A549 (cell line): ENCODE measurements at regions of chr10 and their contacts with region 1.

Region 1: DNA sequence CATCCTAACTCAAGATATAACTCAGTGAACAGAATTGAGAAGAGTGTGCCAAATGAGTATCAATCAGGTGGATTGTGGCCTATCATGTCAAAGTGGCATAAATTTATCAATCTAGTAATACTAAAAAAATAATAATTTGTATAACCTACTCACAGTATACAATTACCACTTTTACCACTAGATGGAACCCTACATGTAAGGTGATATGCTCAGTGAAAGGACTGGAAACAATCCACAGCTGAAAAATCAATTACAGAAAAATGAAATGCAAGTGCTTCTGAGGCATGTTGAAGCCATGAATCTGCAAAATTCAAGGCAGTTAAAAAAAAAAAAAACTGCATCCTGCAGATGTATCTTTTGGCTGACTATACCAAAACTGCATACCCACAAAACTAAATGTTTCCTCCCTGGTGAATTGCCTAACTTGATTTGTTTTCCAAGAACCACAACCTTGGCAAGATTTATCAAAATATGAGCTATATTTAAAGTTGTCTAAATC is 13.9 kb downstream of the ARHGAP19 start:
- DNase-seq: peak; percentile 69 to 70
- ATAC-seq: peak; percentile 86 to 92
- H3K4me3 ChIP-seq: no peak overlapping the region
- H3K27ac ChIP-seq: peak overlapping the region; percentile 15 to 65; a peak in 4 of 6 replicates
- H3K4me1 ChIP-seq: peaks cover 21% of the 10 kb centered on the region
- CTCF ChIP-seq: peak; percentile 78
- EP300 ChIP-seq: no peak
- POLR2A ChIP-seq: no peak
- RAD21 ChIP-seq: peak; percentile 62 to 70

Region 2: GRCh38 chr10:97157578-97158095 is 120.9 kb before region 1 on chr10:
- CTCF ChIA-PET with region 1: no interaction called
- POLR2A ChIA-PET with region 1: no interaction called
- DNase-seq: no peak
- ATAC-seq: no peak
- H3K4me3 ChIP-seq: no peak overlapping the region
- H3K27ac ChIP-seq: no peak overlapping the region
- H3K4me1 ChIP-seq: no peaks in the 10 kb centered on the region
- CTCF ChIP-seq: no peak
- EP300 ChIP-seq: no peak
- POLR2A ChIP-seq: no peak
- RAD21 ChIP-seq: no peak

Region 3: GRCh38 chr10:97259119-97259518 is 19.4 kb before region 1 on chr10:
- CTCF ChIA-PET with region 1: interaction called, 11 read pairs
- POLR2A ChIA-PET with region 1: no interaction called
- DNase-seq: no peak
- ATAC-seq: no peak
- H3K4me3 ChIP-seq: no peak overlapping the region
- H3K27ac ChIP-seq: no peak overlapping the region
- H3K4me1 ChIP-seq: no peaks in the 10 kb centered on the region
- CTCF ChIP-seq: no peak
- EP300 ChIP-seq: no peak
- POLR2A ChIP-seq: no peak
- RAD21 ChIP-seq: no peak

Region 4: GRCh38 chr10:97312897-97313296 is 34.4 kb after region 1 on chr10:
- CTCF ChIA-PET with region 1: interaction called, 18 read pairs
- POLR2A ChIA-PET with region 1: interaction called, 4 read pairs
- DNase-seq: no peak
- ATAC-seq: no peak
- H3K4me3 ChIP-seq: no peak overlapping the region
- H3K27ac ChIP-seq: no peak overlapping the region
- H3K4me1 ChIP-seq: no peaks in the 10 kb centered on the region
- CTCF ChIP-seq: no peak
- EP300 ChIP-seq: no peak
- POLR2A ChIP-seq: no peak
- RAD21 ChIP-seq: no peak

Region 5: GRCh38 chr10:97327348-97328294 is 49.1 kb after region 1 on chr10:
- CTCF ChIA-PET with region 1: interaction called, 22 read pairs
- POLR2A ChIA-PET with region 1: no interaction called
- DNase-seq: peak; percentile 83 to 88
- ATAC-seq: peak; percentile 90 to 91
- H3K4me3 ChIP-seq: no peak overlapping the region
- H3K27ac ChIP-seq: peak overlapping the region; percentile 55 to 67
- H3K4me1 ChIP-seq: peaks cover 40% of the 10 kb centered on the region
- CTCF ChIP-seq: no peak
- EP300 ChIP-seq: no peak; a peak in 1 of 5 replicates
- POLR2A ChIP-seq: no peak
- RAD21 ChIP-seq: peak in 1 of 2 experiments; percentile 5; a peak in 1 of 5 replicates

Region 6: DNA sequence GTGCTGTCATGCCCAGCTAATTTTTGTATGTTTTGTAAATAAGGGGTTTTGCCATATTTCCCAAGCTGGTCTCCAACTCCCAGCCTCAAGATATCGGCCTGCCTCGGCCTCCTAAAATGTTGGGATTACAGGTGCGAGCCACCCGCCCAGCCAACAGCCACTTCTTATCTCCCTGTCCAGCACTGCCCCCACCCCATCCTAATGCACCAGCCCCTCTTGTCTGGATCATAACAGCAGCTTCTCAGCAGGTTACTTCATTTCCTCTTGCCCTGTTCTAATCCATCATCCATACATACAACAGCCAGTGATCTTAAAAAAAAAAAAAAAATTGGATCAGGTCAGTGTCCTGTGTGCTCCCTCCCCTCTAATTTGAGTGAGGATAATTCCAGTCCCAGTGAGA is 68.8 kb after region 1 on chr10:
- CTCF ChIA-PET with region 1: interaction called, 10 read pairs
- POLR2A ChIA-PET with region 1: no interaction called
- DNase-seq: no peak
- ATAC-seq: no peak
- H3K4me3 ChIP-seq: no peak overlapping the region
- H3K27ac ChIP-seq: no peak overlapping the region
- H3K4me1 ChIP-seq: no peaks in the 10 kb centered on the region
- CTCF ChIP-seq: no peak
- EP300 ChIP-seq: no peak
- POLR2A ChIP-seq: no peak
- RAD21 ChIP-seq: no peak